Heart left ventricle (tissue), 16 donors: ENCODE measurements at regions of chr6 and their contacts with region 1.

Region 1: GRCh38 chr6:41920921-41921711 is at the starts of genes BYSL and MED20:
- DNase-seq: peak; percentile 93 to 95 (median 95)
- ATAC-seq: peak; percentile 98 to 99 (median 98)
- H3K4me3 ChIP-seq: peak within 1 kb of the TSS; percentile 64 to 93 (median 83)
- H3K27ac ChIP-seq: peak within 1 kb of the TSS; percentile 95 to 99 (median 98)
- H3K4me1 ChIP-seq: peaks cover 3 to 48% (median 23%) of the 10 kb centered on the region in 12 donors
- H3K27me3 ChIP-seq: no peaks in the 10 kb centered on the region
- CTCF ChIP-seq: peak; percentile 89 to 100 (median 99)
- POLR2A ChIP-seq: peak in 1 of 2 donors; percentile 62
- total RNA-seq, gene BYSL: 4.5 to 15.3 (median 9.2) TPM
- total RNA-seq, gene MED20: 13.5 to 25.5 (median 16.9) TPM

Region 2: DNA sequence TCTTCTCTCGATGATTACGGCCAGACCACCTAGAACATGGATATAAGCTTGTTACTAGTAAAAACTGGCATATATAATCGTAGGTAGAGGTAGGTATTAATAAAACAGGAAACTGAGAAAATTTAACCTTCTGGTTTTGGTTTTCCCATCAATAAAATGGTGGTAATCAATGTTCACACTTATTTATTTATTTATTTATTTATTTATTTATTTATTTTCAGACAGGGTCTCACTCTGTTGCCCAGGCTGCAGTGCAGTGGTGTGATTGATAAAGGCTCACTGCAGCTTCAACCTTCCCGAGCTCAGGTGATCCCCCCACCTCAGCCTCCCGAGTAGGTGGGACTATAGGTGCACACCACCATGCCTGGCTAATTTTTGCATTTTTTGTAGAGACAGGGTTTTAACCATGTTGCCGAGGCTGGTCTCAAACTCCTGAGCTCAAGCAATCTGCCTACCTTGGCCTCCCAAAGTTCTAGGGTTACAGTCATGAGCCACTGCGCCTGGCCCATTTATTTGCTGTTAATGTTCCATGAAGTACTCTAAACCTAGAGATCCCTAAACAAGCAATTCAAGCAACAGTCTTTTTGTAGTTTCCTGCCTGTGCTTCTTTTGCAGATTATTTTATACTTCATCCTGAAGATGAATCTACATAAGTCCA is 122.1 kb before region 1 on chr6:
- intact Hi-C with region 1: loop called in 1 of 10 experiments (anchors 5 kb)
- DNase-seq: no peak
- ATAC-seq: no peak
- H3K4me3 ChIP-seq: no peak overlapping the region
- H3K27ac ChIP-seq: no peak overlapping the region
- H3K4me1 ChIP-seq: peaks cover 0 to 12% (median 0%) of the 10 kb centered on the region in 12 donors
- H3K27me3 ChIP-seq: no peaks in the 10 kb centered on the region
- CTCF ChIP-seq: no peak
- POLR2A ChIP-seq: no peak

Region 3: DNA sequence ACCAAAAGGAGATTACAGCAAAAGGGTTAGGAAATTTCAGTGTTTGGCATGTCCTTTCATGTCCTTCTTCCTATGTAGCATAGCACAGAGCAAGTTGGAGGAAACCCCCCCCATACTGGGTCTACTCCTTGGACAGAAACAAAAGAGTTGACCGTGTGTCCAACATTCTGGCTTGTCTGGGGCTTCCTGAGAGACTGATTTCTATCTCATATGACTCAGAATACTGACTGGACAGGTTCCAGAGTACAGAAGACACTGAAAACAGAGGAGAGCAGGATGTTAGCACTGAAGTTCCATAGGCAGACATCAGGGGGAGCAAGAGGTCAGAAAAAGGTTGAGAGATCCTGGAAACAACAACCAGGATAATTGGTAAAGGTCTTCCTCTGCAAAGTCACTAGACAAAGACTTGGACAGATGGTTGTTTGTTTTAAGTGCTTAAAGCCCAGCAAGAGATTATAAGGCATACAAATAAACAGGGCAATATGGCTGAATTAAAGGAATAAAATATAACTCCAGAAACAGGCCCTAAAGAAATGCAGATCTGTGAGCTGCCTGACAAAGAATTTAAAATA is 74.4 kb before region 1 on chr6:
- intact Hi-C with region 1: loop called in 1 of 10 experiments (anchors 2 kb)
- DNase-seq: peak in 4 of 5 donors; percentile 43 to 70 (median 56)
- ATAC-seq: peak; percentile 87 to 98 (median 96)
- H3K4me3 ChIP-seq: no peak overlapping the region
- H3K27ac ChIP-seq: peak overlapping the region; percentile 2 to 68 (median 42)
- H3K4me1 ChIP-seq: peaks cover 0 to 15% (median 4%) of the 10 kb centered on the region in 12 donors
- H3K27me3 ChIP-seq: no peaks in the 10 kb centered on the region
- CTCF ChIP-seq: peak; percentile 67 to 88 (median 78)
- POLR2A ChIP-seq: no peak

Region 4: DNA sequence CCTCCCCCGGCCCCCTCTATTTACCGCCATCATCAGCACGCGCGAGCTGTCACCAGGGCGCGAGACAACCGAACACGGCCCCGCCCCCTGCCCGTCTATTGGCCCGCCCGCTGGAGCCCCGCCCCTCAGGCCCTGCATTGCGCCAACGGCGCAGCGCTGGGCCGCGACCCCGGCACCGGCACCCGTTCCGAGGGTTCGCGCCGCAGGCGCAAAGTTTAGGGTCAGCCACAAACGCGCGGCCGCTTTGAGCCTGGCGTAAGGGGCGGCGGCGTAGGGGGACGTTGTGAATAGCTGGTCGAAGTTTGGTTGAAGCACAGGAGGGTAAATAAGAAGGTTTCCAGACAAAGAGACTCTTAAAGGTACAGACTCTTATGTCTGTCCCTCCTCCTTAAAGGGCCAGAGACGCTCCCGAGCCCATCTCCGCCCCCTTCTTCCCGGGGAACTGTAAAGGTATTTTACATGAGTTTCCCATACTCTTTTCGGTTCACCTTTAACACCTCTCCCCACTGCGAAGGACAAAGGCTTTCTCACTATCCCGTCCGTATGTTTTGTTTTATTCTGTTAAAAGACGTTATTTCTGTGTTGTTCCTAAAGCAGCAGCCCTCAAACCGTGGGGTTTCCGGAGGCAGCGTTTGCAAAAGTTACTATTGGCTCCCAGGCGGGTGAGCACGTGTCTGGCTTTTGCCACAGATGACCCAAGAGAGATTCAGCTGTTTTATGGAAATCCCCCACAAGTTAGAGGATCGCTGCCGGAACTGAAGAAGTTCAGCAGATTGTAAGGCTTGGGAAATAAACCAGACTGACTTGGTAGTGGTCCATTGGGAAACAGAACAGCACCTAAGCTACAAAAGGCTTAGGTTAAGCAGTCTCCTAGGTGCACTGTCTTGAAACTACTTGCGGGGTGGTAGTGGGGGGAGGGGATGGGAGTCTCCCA is 25.5 kb before region 1 on chr6 and contains the start of gene USP49:
- intact Hi-C with region 1: loop called in 1 of 10 experiments (anchors 2 kb)
- DNase-seq: peak; percentile 88 to 92 (median 91)
- ATAC-seq: peak; percentile 92 to 99 (median 98)
- H3K4me3 ChIP-seq: peak within 1 kb of the TSS; percentile 59 to 94 (median 79)
- H3K27ac ChIP-seq: peak within 1 kb of the TSS in 11 of 12 donors; percentile 60 to 92 (median 74)
- H3K4me1 ChIP-seq: peaks cover 0 to 31% (median 12%) of the 10 kb centered on the region in 12 donors
- H3K27me3 ChIP-seq: no peaks in the 10 kb centered on the region
- CTCF ChIP-seq: no peak
- POLR2A ChIP-seq: no peak
- total RNA-seq, gene USP49: 1.2 to 3.4 (median 2.4) TPM

Region 5: GRCh38 chr6:42217519-42218367 is 296.6 kb after region 1 on chr6 and contains the start of gene MRPS10:
- intact Hi-C with region 1: loop called in 3 of 10 experiments (anchors 5 to 10 kb)
- DNase-seq: peak; percentile 93 to 94 (median 93)
- ATAC-seq: peak; percentile 99 to 100 (median 100)
- H3K4me3 ChIP-seq: peak within 1 kb of the TSS; percentile 49 to 90 (median 80)
- H3K27ac ChIP-seq: peak within 1 kb of the TSS; percentile 53 to 87 (median 80)
- H3K4me1 ChIP-seq: peaks cover 0 to 23% (median 12%) of the 10 kb centered on the region in 12 donors
- H3K27me3 ChIP-seq: no peaks in the 10 kb centered on the region
- CTCF ChIP-seq: peak in 1 of 12 donors; percentile 22
- POLR2A ChIP-seq: peak in 1 of 2 donors; percentile 62
- total RNA-seq, gene MRPS10: 47.5 to 73.5 (median 57.3) TPM